ENCODE measurements at regions of chr9 and their contacts with region 1.

Region 1: GRCh38 chr9:122099271-122099869 is 6.3 kb upstream of the TTLL11 start:
- DNase-seq: peak; percentile 67
- ATAC-seq: peak; percentile 87
- H3K4me3 Mint-ChIP-seq: peak overlapping the region; percentile 57
- H3K27ac Mint-ChIP-seq: no peak overlapping the region
- H3K4me1 Mint-ChIP-seq: peaks cover 9% of the 10 kb centered on the region
- H3K27me3 Mint-ChIP-seq: peaks cover 14% of the 10 kb centered on the region
- CTCF ChIP-seq: no peak

Region 2: GRCh38 chr9:121972501-121972981 is 126.8 kb before region 1 on chr9:
- CTCF ChIA-PET with region 1: no interaction called
- POLR2A ChIA-PET with region 1: no interaction called
- intact Hi-C with region 1: no loop called
- DNase-seq: no peak
- ATAC-seq: peak; percentile 69
- H3K4me3 Mint-ChIP-seq: no peak overlapping the region
- H3K27ac Mint-ChIP-seq: no peak overlapping the region
- H3K4me1 Mint-ChIP-seq: peaks cover 22% of the 10 kb centered on the region
- H3K27me3 Mint-ChIP-seq: no peaks in the 10 kb centered on the region
- CTCF ChIP-seq: no peak

Region 3: GRCh38 chr9:122078557-122078956 is 20.8 kb before region 1 on chr9:
- CTCF ChIA-PET with region 1: interaction called, 10 read pairs
- POLR2A ChIA-PET with region 1: no interaction called
- intact Hi-C with region 1: no loop called
- DNase-seq: no peak
- ATAC-seq: no peak
- H3K4me3 Mint-ChIP-seq: no peak overlapping the region
- H3K27ac Mint-ChIP-seq: no peak overlapping the region
- H3K4me1 Mint-ChIP-seq: no peaks in the 10 kb centered on the region
- H3K27me3 Mint-ChIP-seq: no peaks in the 10 kb centered on the region
- CTCF ChIP-seq: no peak

Region 4: GRCh38 chr9:122118343-122119165 is 19.2 kb after region 1 on chr9:
- CTCF ChIA-PET with region 1: interaction called, 84 read pairs
- POLR2A ChIA-PET with region 1: no interaction called
- intact Hi-C with region 1: loop called (anchors 1 kb)
- DNase-seq: no peak
- ATAC-seq: no peak
- H3K4me3 Mint-ChIP-seq: no peak overlapping the region
- H3K27ac Mint-ChIP-seq: no peak overlapping the region
- H3K4me1 Mint-ChIP-seq: no peaks in the 10 kb centered on the region
- H3K27me3 Mint-ChIP-seq: peaks cover 12% of the 10 kb centered on the region
- CTCF ChIP-seq: no peak

Region 5: DNA sequence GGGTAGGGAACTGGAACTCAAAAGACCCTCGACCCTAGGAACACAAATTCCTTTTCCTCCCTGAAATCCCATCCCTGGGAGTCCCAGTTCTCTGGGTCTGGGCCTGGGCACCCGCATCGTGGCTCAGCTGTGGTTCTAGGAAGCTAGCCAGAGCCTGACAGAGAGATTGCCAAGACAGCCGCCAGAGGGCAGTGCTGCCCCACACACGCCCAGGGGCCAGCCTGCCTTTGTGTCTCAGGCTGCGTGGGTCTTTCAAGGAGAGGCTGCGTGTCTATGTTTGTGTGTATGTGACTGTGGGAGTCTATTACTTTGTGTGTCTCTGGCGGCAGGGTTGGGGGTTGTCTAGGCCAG is 25.8 kb after region 1 on chr9:
- CTCF ChIA-PET with region 1: interaction called, 84 read pairs
- POLR2A ChIA-PET with region 1: no interaction called
- intact Hi-C with region 1: loop called (anchors 1 kb)
- DNase-seq: peak; percentile 76
- ATAC-seq: peak; percentile 84
- H3K4me3 Mint-ChIP-seq: peak overlapping the region; percentile 38
- H3K27ac Mint-ChIP-seq: no peak overlapping the region
- H3K4me1 Mint-ChIP-seq: peaks cover 13% of the 10 kb centered on the region
- H3K27me3 Mint-ChIP-seq: peaks cover 40% of the 10 kb centered on the region
- CTCF ChIP-seq: peak; percentile 75

Region 6: DNA sequence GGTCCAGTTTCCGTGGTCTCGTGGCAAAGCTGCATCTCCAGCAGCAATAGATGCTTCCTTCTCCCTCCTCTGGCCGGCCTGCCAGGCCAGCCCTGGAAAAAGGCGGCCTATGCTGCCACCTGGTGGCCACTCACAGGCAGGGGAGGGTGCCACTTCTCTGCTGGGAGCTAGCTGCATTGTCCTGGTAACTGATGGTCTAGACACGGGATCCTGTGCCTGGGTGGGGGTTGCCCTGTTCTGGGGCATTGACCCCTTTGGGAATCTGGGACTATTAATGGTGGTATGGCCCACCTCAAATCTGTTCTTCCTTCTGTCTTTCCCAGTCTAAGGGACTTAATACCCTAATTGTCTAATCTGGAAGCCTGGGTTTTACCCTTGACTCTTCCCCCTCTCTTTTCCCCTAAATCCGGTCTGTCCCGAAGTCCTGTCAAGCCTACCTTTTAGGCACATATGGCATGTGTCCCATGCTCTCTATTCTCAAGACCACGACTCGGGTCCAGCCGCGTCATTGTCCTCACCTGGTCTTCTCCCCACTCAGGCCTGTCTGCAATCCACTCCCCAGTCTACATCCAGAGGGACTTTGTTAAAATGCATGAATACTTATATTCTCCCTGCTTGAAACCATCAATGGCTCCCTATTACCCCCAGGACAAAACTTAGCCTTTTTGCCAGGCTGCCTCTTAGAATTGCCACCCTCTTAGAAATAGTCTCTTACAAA is 251.4 kb after region 1 on chr9:
- CTCF ChIA-PET with region 1: interaction called, 88 read pairs
- POLR2A ChIA-PET with region 1: interaction called, 3 read pairs
- intact Hi-C with region 1: loop called (anchors 1 kb)
- DNase-seq: peak; percentile 75
- ATAC-seq: peak; percentile 90
- H3K4me3 Mint-ChIP-seq: no peak overlapping the region
- H3K27ac Mint-ChIP-seq: no peak overlapping the region
- H3K4me1 Mint-ChIP-seq: peaks cover 8% of the 10 kb centered on the region
- H3K27me3 Mint-ChIP-seq: peaks cover 35% of the 10 kb centered on the region
- CTCF ChIP-seq: no peak

Region 7: GRCh38 chr9:122453677-122454135 is 354.3 kb after region 1 on chr9:
- CTCF ChIA-PET with region 1: interaction called, 9 read pairs
- POLR2A ChIA-PET with region 1: no interaction called
- intact Hi-C with region 1: loop called (anchors 1 kb)
- DNase-seq: no peak
- ATAC-seq: no peak
- H3K4me3 Mint-ChIP-seq: no peak overlapping the region
- H3K27ac Mint-ChIP-seq: no peak overlapping the region
- H3K4me1 Mint-ChIP-seq: no peaks in the 10 kb centered on the region
- H3K27me3 Mint-ChIP-seq: peaks cover 22% of the 10 kb centered on the region
- CTCF ChIP-seq: no peak

Region 8: GRCh38 chr9:122810306-122810946 is 711.1 kb after region 1 on chr9:
- CTCF ChIA-PET with region 1: interaction called, 19 read pairs
- POLR2A ChIA-PET with region 1: no interaction called
- intact Hi-C with region 1: loop called (anchors 1 kb)
- DNase-seq: peak; percentile 54
- ATAC-seq: peak; percentile 88
- H3K4me3 Mint-ChIP-seq: no peak overlapping the region
- H3K27ac Mint-ChIP-seq: no peak overlapping the region
- H3K4me1 Mint-ChIP-seq: peaks cover 9% of the 10 kb centered on the region
- H3K27me3 Mint-ChIP-seq: no peaks in the 10 kb centered on the region
- CTCF ChIP-seq: no peak